B cell (primary cell): ENCODE measurements at regions of chrX and their contacts with region 1.

Region 1: GRCh38 chrX:103711533-103712369 is 1.0 kb downstream of the TMEM31 start:
- DNase-seq: peak; percentile 62
- ATAC-seq: peak; percentile 31
- H3K4me3 ChIP-seq: no peak overlapping the region
- H3K4me3 Mint-ChIP-seq: no peak overlapping the region
- H3K27ac ChIP-seq: no peak overlapping the region
- H3K27ac Mint-ChIP-seq: no peak overlapping the region
- H3K4me1 ChIP-seq: no peaks in the 10 kb centered on the region
- H3K4me1 Mint-ChIP-seq: no peaks in the 10 kb centered on the region
- H3K27me3 ChIP-seq: no peaks in the 10 kb centered on the region
- H3K27me3 Mint-ChIP-seq: no peaks in the 10 kb centered on the region
- CTCF ChIP-seq: peak; percentile 64

Region 2: DNA sequence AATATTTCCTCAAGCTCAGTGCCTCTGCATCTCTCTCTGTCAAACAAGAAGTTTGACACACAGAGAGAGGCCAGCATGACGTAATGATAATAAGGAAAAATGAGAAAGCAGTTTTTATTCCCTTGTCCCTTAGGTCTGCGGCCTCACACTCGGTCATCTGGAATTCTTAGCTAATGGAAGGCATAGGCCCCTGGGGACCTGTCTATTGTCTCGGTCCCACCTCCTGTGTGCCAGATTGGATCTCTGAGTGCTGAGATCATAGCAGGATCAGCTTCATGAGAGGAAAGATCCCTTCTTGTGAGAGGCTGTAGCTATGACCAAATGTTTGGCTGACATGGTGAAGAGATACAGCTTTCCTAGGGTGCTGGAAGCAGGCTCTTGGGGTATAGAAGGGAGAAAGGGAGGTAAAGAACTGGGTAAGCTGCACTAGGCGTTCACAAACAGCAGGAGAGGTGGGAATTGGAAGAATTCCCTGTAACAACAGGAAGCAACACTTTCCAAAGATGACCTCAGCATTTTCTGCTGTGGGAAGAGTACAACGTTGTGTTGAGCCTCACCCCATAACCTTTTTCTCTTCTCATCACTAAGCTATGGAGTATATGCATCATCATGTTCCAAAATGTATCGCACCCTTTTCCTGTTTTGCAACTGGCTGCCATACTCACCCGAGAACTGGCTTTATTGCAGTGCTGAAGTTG is 19.2 kb after region 1 on chrX:
- CTCF ChIA-PET with region 1: no interaction called
- POLR2A ChIA-PET with region 1: no interaction called
- intact Hi-C with region 1: no loop called
- DNase-seq: no peak
- ATAC-seq: no peak
- H3K4me3 ChIP-seq: no peak overlapping the region
- H3K4me3 Mint-ChIP-seq: no peak overlapping the region
- H3K27ac ChIP-seq: no peak overlapping the region
- H3K27ac Mint-ChIP-seq: no peak overlapping the region
- H3K4me1 ChIP-seq: no peaks in the 10 kb centered on the region
- H3K4me1 Mint-ChIP-seq: peaks cover 7% of the 10 kb centered on the region
- H3K27me3 ChIP-seq: peaks cover 0 to 3% (median 0%) of the 10 kb centered on the region in 4 experiments
- H3K27me3 Mint-ChIP-seq: peaks cover 6% of the 10 kb centered on the region
- CTCF ChIP-seq: no peak

Region 3: GRCh38 chrX:103756736-103757135 is 45.0 kb after region 1 on chrX:
- CTCF ChIA-PET with region 1: no interaction called
- POLR2A ChIA-PET with region 1: no interaction called
- intact Hi-C with region 1: no loop called
- DNase-seq: no peak
- ATAC-seq: no peak
- H3K4me3 ChIP-seq: no peak overlapping the region
- H3K4me3 Mint-ChIP-seq: no peak overlapping the region
- H3K27ac ChIP-seq: no peak overlapping the region
- H3K27ac Mint-ChIP-seq: no peak overlapping the region
- H3K4me1 ChIP-seq: no peaks in the 10 kb centered on the region
- H3K4me1 Mint-ChIP-seq: no peaks in the 10 kb centered on the region
- H3K27me3 ChIP-seq: no peaks in the 10 kb centered on the region
- H3K27me3 Mint-ChIP-seq: no peaks in the 10 kb centered on the region
- CTCF ChIP-seq: no peak

Region 4: GRCh38 chrX:103817502-103817901 is 105.8 kb after region 1 on chrX:
- CTCF ChIA-PET with region 1: interaction called, 4 read pairs
- POLR2A ChIA-PET with region 1: no interaction called
- intact Hi-C with region 1: loop called (anchors 1 kb)
- DNase-seq: peak; percentile 64
- ATAC-seq: no peak
- H3K4me3 ChIP-seq: no peak overlapping the region
- H3K4me3 Mint-ChIP-seq: no peak overlapping the region
- H3K27ac ChIP-seq: no peak overlapping the region
- H3K27ac Mint-ChIP-seq: no peak overlapping the region
- H3K4me1 ChIP-seq: no peaks in the 10 kb centered on the region
- H3K4me1 Mint-ChIP-seq: no peaks in the 10 kb centered on the region
- H3K27me3 ChIP-seq: no peaks in the 10 kb centered on the region
- H3K27me3 Mint-ChIP-seq: no peaks in the 10 kb centered on the region
- CTCF ChIP-seq: peak; percentile 70